GM12878 (cell line): ENCODE measurements at regions of chr3 and their contacts with region 1.

Region 1: GRCh38 chr3:115783938-115784738 is 160.8 kb downstream of the GAP43 start:
- DNase-seq: peak; percentile 15
- ATAC-seq: peak; percentile 94
- H3K4me3 ChIP-seq: peak overlapping the region; percentile 59; the same call in 1 of the 2 replicates
- H3K27ac ChIP-seq: no peak overlapping the region
- H3K4me1 ChIP-seq: no peaks in the 10 kb centered on the region; the same call in 1 of the 2 replicates
- H3K27me3 ChIP-seq: peaks cover 0 to 3% of the 10 kb centered on the region in 2 experiments; a peak in 1 of 4 replicates
- CTCF ChIP-seq: peak; percentile 96 to 98 (median 96)
- EP300 ChIP-seq: no peak
- POLR2A ChIP-seq: peak; percentile 62; the same call in 1 of the 2 replicates
- RAD21 ChIP-seq: peak; percentile 65

Region 2: DNA sequence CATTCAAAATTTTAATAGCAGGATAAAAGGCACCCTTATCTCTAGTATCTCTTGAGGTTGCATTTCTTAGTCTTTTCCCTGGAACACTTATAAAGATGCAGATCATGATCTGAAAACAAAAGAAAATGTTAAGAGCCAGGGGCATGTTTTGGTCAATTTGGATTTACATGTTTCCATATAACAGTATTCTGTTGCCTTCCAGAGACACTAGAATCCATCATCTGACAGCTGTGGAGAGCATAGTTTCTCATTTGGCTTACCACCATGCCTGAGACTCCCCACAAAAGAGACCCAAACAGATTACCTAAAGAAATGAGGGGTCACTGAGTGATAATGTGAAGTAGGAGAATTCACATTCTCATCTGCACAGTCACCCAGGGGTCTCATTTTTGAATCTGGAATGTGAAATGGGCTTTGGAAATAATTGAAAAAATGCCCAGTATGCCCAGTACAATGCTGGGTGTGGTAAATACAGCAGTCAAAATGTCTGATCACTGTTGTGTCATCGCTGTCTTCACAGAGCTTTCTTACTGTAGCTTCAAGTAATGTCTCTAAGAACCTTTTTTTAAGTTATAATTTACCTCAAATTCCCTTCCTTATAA is 557.2 kb before region 1 on chr3:
- CTCF ChIA-PET with region 1: no interaction called
- POLR2A ChIA-PET with region 1: no interaction called
- RAD21 ChIA-PET with region 1: no interaction called
- SMC1A ChIA-PET with region 1: no interaction called
- in situ Hi-C with region 1: loop called (anchors 10 kb)
- intact Hi-C with region 1: no loop called
- DNase-seq: no peak
- ATAC-seq: no peak
- H3K4me3 ChIP-seq: no peak overlapping the region
- H3K27ac ChIP-seq: no peak overlapping the region
- H3K4me1 ChIP-seq: no peaks in the 10 kb centered on the region
- H3K27me3 ChIP-seq: no peaks in the 10 kb centered on the region; a peak in 1 of 4 replicates
- CTCF ChIP-seq: no peak
- EP300 ChIP-seq: no peak
- POLR2A ChIP-seq: no peak
- RAD21 ChIP-seq: no peak

Region 3: DNA sequence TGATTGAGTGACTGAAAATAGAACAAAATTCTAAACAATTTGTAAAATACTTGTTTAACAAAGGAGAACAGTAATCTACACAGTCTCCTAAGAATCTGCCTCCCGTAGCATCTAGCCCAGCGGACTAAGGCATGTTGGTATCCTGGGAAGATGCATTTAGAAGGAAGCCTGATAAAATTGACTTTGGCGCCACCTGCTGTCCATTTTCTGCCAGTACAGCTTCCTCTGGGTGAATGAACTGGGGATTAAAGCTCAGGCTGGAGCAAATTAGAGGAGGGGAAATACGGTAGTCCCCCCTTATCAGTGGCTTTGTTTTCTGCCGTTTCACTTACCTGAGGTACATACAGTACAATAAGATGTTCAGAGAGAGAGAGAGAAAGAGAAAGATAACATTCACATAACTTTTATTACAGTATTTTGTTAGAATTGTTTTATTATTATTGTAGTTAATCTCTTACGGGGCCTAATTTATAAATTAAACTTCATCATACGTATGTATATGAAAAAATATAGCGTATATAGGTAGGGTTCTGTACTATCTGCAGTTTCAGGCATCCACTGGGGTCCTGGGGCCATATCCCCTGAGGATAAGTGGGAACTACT is 30.7 kb after region 1 on chr3:
- CTCF ChIA-PET with region 1: interaction called, 23 read pairs
- POLR2A ChIA-PET with region 1: no interaction called
- RAD21 ChIA-PET with region 1: interaction called, 4 read pairs
- SMC1A ChIA-PET with region 1: interaction called, 6 read pairs
- in situ Hi-C with region 1: no loop called
- intact Hi-C with region 1: no loop called
- DNase-seq: no peak
- ATAC-seq: peak; percentile 73
- H3K4me3 ChIP-seq: no peak overlapping the region
- H3K27ac ChIP-seq: no peak overlapping the region
- H3K4me1 ChIP-seq: no peaks in the 10 kb centered on the region
- H3K27me3 ChIP-seq: no peaks in the 10 kb centered on the region; a peak in 1 of 4 replicates
- CTCF ChIP-seq: peak; percentile 85
- EP300 ChIP-seq: no peak
- POLR2A ChIP-seq: no peak
- RAD21 ChIP-seq: peak; percentile 68